ENCODE measurements at regions of chr15 and their contacts with region 1.

Region 1: DNA sequence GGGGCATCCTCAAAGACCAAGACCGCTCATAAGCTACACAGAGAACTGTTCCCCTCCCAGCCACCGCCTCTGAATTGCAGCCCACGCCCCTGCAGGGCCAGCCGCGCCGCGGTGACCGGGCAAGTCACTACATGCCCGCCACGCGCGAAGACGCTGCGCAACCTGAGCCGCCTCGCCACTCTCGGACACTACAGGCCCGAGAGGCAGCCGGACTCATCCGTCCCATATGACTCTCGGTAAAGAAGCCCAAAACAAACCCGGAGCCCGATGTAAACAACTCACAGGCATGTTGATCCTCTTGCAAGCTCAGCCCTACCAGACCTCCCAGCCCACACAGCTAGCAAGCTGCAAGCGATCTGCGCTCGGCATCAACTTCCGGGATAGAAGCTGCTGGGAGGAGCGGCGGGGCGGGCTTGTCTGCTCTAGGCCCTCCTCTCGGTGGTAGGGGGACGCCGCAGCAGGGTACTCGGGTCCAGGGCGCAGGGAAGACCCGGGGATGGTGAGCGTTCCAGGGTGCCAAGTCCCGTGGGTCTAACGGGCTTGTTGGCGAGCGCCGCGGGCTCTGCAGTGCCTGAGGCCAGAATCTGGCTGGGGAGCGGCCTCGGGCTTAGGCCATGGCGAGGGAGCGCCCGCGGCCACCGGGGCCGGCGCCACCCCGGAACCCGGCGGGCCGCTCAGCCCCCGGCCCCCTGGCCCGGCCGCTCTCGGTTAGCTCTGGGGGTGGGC is at the start of gene RPS27L:
- DNase-seq: peak; percentile 81
- ATAC-seq: peak; percentile 95
- H3K4me3 Mint-ChIP-seq: peak within 1 kb of the TSS; percentile 98
- H3K27ac Mint-ChIP-seq: peak within 1 kb of the TSS; percentile 97
- H3K4me1 Mint-ChIP-seq: peaks cover 27% of the 10 kb centered on the region
- H3K27me3 Mint-ChIP-seq: no peaks in the 10 kb centered on the region
- CTCF ChIP-seq: no peak
- total RNA-seq, gene RPS27L: 70.8 and 74.9 TPM in 2 replicates

Region 2: GRCh38 chr15:63048115-63048775 is 109.0 kb before region 1 on chr15:
- CTCF ChIA-PET with region 1: interaction called, 3 read pairs
- POLR2A ChIA-PET with region 1: interaction called, 6 read pairs
- intact Hi-C with region 1: loop called (anchors 1 kb)
- DNase-seq: peak; percentile 84
- ATAC-seq: peak; percentile 86
- H3K4me3 Mint-ChIP-seq: peak overlapping the region; percentile 92
- H3K27ac Mint-ChIP-seq: peak overlapping the region; percentile 53
- H3K4me1 Mint-ChIP-seq: peaks cover 22% of the 10 kb centered on the region
- H3K27me3 Mint-ChIP-seq: peaks cover 28% of the 10 kb centered on the region
- CTCF ChIP-seq: peak; percentile 73

Region 3: DNA sequence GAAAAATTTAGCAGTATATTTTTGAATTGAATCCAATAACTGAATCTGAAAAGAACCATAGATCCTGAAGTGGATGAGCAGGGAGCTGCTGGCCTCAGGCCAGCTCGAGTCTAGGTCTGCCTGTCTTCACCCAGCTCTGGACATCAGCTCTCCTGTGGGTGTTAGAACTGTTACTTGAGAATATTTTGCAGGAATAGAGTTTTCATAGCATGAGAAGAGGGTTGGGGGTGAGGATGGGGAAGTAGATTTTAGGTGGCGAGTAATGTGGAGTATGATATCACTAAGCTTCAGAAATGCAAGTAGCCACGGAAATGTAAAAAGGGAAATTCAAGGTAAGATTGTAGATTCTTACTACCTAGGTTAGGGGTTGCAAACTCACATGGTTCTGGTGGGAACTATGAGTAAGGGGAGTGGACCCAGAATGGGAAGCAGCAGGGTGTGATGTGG is 38.3 kb after region 1 on chr15:
- CTCF ChIA-PET with region 1: interaction called, 3 read pairs
- POLR2A ChIA-PET with region 1: interaction called, 32 read pairs
- intact Hi-C with region 1: no loop called
- DNase-seq: no peak
- ATAC-seq: no peak
- H3K4me3 Mint-ChIP-seq: peak overlapping the region; percentile 56
- H3K27ac Mint-ChIP-seq: peak overlapping the region; percentile 68
- H3K4me1 Mint-ChIP-seq: peaks cover 91% of the 10 kb centered on the region
- H3K27me3 Mint-ChIP-seq: no peaks in the 10 kb centered on the region
- CTCF ChIP-seq: no peak

Region 4: GRCh38 chr15:63226966-63227401 is 69.7 kb after region 1 on chr15:
- CTCF ChIA-PET with region 1: no interaction called
- POLR2A ChIA-PET with region 1: interaction called, 14 read pairs
- intact Hi-C with region 1: loop called (anchors 5 kb)
- DNase-seq: no peak
- ATAC-seq: no peak
- H3K4me3 Mint-ChIP-seq: no peak overlapping the region
- H3K27ac Mint-ChIP-seq: no peak overlapping the region
- H3K4me1 Mint-ChIP-seq: peaks cover 56% of the 10 kb centered on the region
- H3K27me3 Mint-ChIP-seq: no peaks in the 10 kb centered on the region
- CTCF ChIP-seq: no peak

Region 5: GRCh38 chr15:63277038-63277892 is 120.0 kb after region 1 on chr15 and contains the start of gene APH1B:
- CTCF ChIA-PET with region 1: interaction called, 5 read pairs
- POLR2A ChIA-PET with region 1: interaction called, 27 read pairs
- intact Hi-C with region 1: loop called (anchors 1 kb)
- DNase-seq: peak; percentile 82
- ATAC-seq: peak; percentile 96
- H3K4me3 Mint-ChIP-seq: peak within 1 kb of the TSS; percentile 90
- H3K27ac Mint-ChIP-seq: peak within 1 kb of the TSS; percentile 89
- H3K4me1 Mint-ChIP-seq: peaks cover 21% of the 10 kb centered on the region
- H3K27me3 Mint-ChIP-seq: no peaks in the 10 kb centered on the region
- CTCF ChIP-seq: no peak
- total RNA-seq, gene APH1B: 22.1 and 23.7 TPM in 2 replicates

Measured in activated B cell treated with CpG ODN at 0.5 μM for 24 hours (primary cell).